CD4-positive, alpha-beta memory T cell (primary cell): ENCODE measurements at regions of chr1 and their contacts with region 1.

Region 1: DNA sequence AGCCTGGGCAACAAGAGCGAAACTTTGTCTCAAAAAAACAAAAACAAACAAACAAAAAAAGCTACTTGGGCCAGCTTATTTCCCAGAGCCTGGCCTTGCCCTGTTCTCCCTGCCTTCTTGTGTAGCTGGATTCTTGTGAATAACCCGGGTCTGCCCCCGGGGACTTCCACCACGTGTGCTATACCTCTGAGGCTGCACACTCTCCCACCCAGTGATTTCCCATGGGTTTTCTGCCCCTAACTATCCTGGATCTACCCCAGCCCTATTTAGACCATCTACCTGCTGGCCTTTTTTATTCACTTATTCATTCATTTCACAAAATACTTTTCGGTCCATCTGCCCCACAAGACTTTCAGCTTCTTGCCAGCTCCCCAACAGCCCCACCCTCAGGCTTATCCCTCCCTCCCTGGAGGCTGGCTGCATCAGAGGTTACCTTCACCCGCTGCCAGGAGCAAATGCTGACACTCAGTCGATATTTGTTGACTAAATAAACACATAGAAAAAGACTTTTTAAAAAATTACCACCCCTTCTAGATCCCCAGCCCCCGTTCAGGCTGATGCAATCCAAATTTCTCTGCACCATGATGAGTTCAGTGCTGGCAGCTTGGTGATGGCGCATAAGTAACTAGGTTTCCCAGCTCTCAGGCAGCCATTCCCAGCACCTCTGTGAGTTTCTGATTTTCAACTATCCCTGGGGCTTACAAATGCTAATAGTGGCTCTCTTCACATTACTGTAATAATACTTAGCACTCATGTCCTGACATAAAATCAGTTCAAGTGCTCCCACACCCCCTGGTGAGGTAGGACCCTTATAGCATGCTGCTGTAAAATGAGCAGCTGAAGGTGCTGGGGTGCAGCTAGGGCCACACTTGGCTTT is 30.7 kb upstream of the TARBP1 start:
- DNase-seq: no peak
- H3K4me3 ChIP-seq: no peak overlapping the region
- H3K4me3 Mint-ChIP-seq: no peak overlapping the region
- H3K27ac ChIP-seq: no peak overlapping the region
- H3K27ac Mint-ChIP-seq: no peak overlapping the region
- H3K4me1 ChIP-seq: no peaks in the 10 kb centered on the region
- H3K4me1 Mint-ChIP-seq: no peaks in the 10 kb centered on the region
- H3K27me3 ChIP-seq: no peaks in the 10 kb centered on the region
- H3K27me3 Mint-ChIP-seq: peaks cover 2 to 5% of the 10 kb centered on the region in 2 donors

Region 2: GRCh38 chr1:234427950-234428642 is 81.6 kb before region 1 on chr1:
- CTCF ChIA-PET with region 1: no interaction called
- POLR2A ChIA-PET with region 1: no interaction called
- intact Hi-C with region 1: no loop called
- DNase-seq: no peak
- H3K4me3 ChIP-seq: no peak overlapping the region
- H3K4me3 Mint-ChIP-seq: no peak overlapping the region
- H3K27ac ChIP-seq: no peak overlapping the region
- H3K27ac Mint-ChIP-seq: no peak overlapping the region
- H3K4me1 ChIP-seq: no peaks in the 10 kb centered on the region
- H3K4me1 Mint-ChIP-seq: no peaks in the 10 kb centered on the region
- H3K27me3 ChIP-seq: no peaks in the 10 kb centered on the region
- H3K27me3 Mint-ChIP-seq: no peaks in the 10 kb centered on the region

Region 3: GRCh38 chr1:234478481-234479309 is 31.0 kb before region 1 on chr1 and contains the start of gene TARBP1:
- CTCF ChIA-PET with region 1: no interaction called
- POLR2A ChIA-PET with region 1: no interaction called
- intact Hi-C with region 1: no loop called
- DNase-seq: peak; percentile 73 to 83 (median 82)
- H3K4me3 ChIP-seq: peak within 1 kb of the TSS; percentile 47 to 63
- H3K4me3 Mint-ChIP-seq: peak within 1 kb of the TSS; percentile 87 to 93 (median 90)
- H3K27ac ChIP-seq: peak within 1 kb of the TSS; percentile 42
- H3K27ac Mint-ChIP-seq: peak within 1 kb of the TSS; percentile 57 to 96 (median 89)
- H3K4me1 ChIP-seq: peaks cover 29% of the 10 kb centered on the region
- H3K4me1 Mint-ChIP-seq: peaks cover 15 to 44% (median 27%) of the 10 kb centered on the region in 4 donors
- H3K27me3 ChIP-seq: no peaks in the 10 kb centered on the region
- H3K27me3 Mint-ChIP-seq: peaks cover 5 to 9% of the 10 kb centered on the region in 2 donors
- total RNA-seq, gene TARBP1: 25.8 to 27.5 TPM

Region 4: GRCh38 chr1:234499119-234499942 is 10.4 kb before region 1 on chr1:
- CTCF ChIA-PET with region 1: interaction called, 15 read pairs
- POLR2A ChIA-PET with region 1: no interaction called
- intact Hi-C with region 1: no loop called
- DNase-seq: peak; percentile 72 to 78 (median 74)
- H3K4me3 ChIP-seq: no peak overlapping the region
- H3K4me3 Mint-ChIP-seq: peak overlapping the region; percentile 28 to 62 (median 43)
- H3K27ac ChIP-seq: no peak overlapping the region
- H3K27ac Mint-ChIP-seq: peak overlapping the region in 6 of 7 donors; percentile 15 to 63 (median 48)
- H3K4me1 ChIP-seq: peaks cover 11% of the 10 kb centered on the region
- H3K4me1 Mint-ChIP-seq: peaks cover 6 to 11% (median 9%) of the 10 kb centered on the region in 4 donors
- H3K27me3 ChIP-seq: no peaks in the 10 kb centered on the region
- H3K27me3 Mint-ChIP-seq: peaks cover 2 to 13% of the 10 kb centered on the region in 2 donors

Region 5: GRCh38 chr1:234553156-234553863 is 43.6 kb after region 1 on chr1:
- CTCF ChIA-PET with region 1: no interaction called
- POLR2A ChIA-PET with region 1: no interaction called
- intact Hi-C with region 1: no loop called
- DNase-seq: no peak
- H3K4me3 ChIP-seq: no peak overlapping the region
- H3K4me3 Mint-ChIP-seq: no peak overlapping the region
- H3K27ac ChIP-seq: no peak overlapping the region
- H3K27ac Mint-ChIP-seq: no peak overlapping the region
- H3K4me1 ChIP-seq: no peaks in the 10 kb centered on the region
- H3K4me1 Mint-ChIP-seq: no peaks in the 10 kb centered on the region
- H3K27me3 ChIP-seq: no peaks in the 10 kb centered on the region
- H3K27me3 Mint-ChIP-seq: no peaks in the 10 kb centered on the region

Region 6: GRCh38 chr1:234716908-234717375 is 207.3 kb after region 1 on chr1:
- CTCF ChIA-PET with region 1: no interaction called
- POLR2A ChIA-PET with region 1: no interaction called
- intact Hi-C with region 1: no loop called
- DNase-seq: no peak
- H3K4me3 ChIP-seq: no peak overlapping the region
- H3K4me3 Mint-ChIP-seq: no peak overlapping the region
- H3K27ac ChIP-seq: no peak overlapping the region
- H3K27ac Mint-ChIP-seq: no peak overlapping the region
- H3K4me1 ChIP-seq: peaks cover 6% of the 10 kb centered on the region
- H3K4me1 Mint-ChIP-seq: peaks cover 5 to 23% (median 15%) of the 10 kb centered on the region in 4 donors
- H3K27me3 ChIP-seq: no peaks in the 10 kb centered on the region
- H3K27me3 Mint-ChIP-seq: no peaks in the 10 kb centered on the region